T-cell (primary cell): ENCODE measurements at regions of chr7 and their contacts with region 1.

Region 1: GRCh38 chr7:47979145-47979831 is at the start of gene HUS1:
- DNase-seq: peak; percentile 81 to 93 (median 89)
- ATAC-seq: peak; percentile 98 to 99 (median 98)
- H3K4me3 ChIP-seq: peak within 1 kb of the TSS; percentile 62 to 90
- H3K4me3 Mint-ChIP-seq: peak within 1 kb of the TSS; percentile 91 to 95 (median 94)
- H3K27ac ChIP-seq: peak within 1 kb of the TSS; percentile 95
- H3K27ac Mint-ChIP-seq: peak within 1 kb of the TSS; percentile 99 to 100
- H3K4me1 ChIP-seq: peaks cover 9 to 10% of the 10 kb centered on the region in 2 experiments
- H3K4me1 Mint-ChIP-seq: peaks cover 27 to 34% (median 32%) of the 10 kb centered on the region in 3 donors
- H3K27me3 ChIP-seq: no peaks in the 10 kb centered on the region
- H3K27me3 Mint-ChIP-seq: no peaks in the 10 kb centered on the region
- total RNA-seq, gene HUS1: 56.9 to 71.0 (median 59.4) TPM

Region 2: GRCh38 chr7:47847207-47847606 is 132.1 kb before region 1 on chr7:
- CTCF ChIA-PET with region 1: no interaction called
- POLR2A ChIA-PET with region 1: interaction called in 1 of 2 experiments, 11 read pairs
- DNase-seq: no peak
- ATAC-seq: no peak
- H3K4me3 ChIP-seq: no peak overlapping the region
- H3K4me3 Mint-ChIP-seq: no peak overlapping the region
- H3K27ac ChIP-seq: no peak overlapping the region
- H3K27ac Mint-ChIP-seq: no peak overlapping the region
- H3K4me1 ChIP-seq: no peaks in the 10 kb centered on the region
- H3K4me1 Mint-ChIP-seq: no peaks in the 10 kb centered on the region
- H3K27me3 ChIP-seq: peaks cover 0 to 6% of the 10 kb centered on the region in 2 experiments
- H3K27me3 Mint-ChIP-seq: peaks cover 0 to 3% of the 10 kb centered on the region in 2 donors

Region 3: GRCh38 chr7:47999418-47999817 is 20.1 kb after region 1 on chr7:
- CTCF ChIA-PET with region 1: no interaction called
- POLR2A ChIA-PET with region 1: no interaction called
- DNase-seq: no peak
- ATAC-seq: no peak
- H3K4me3 ChIP-seq: no peak overlapping the region
- H3K4me3 Mint-ChIP-seq: no peak overlapping the region
- H3K27ac ChIP-seq: no peak overlapping the region
- H3K27ac Mint-ChIP-seq: no peak overlapping the region
- H3K4me1 ChIP-seq: no peaks in the 10 kb centered on the region
- H3K4me1 Mint-ChIP-seq: no peaks in the 10 kb centered on the region
- H3K27me3 ChIP-seq: no peaks in the 10 kb centered on the region
- H3K27me3 Mint-ChIP-seq: no peaks in the 10 kb centered on the region